GM12878 (cell line): ENCODE measurements at regions of chr14 and their contacts with region 1.

Region 1: DNA sequence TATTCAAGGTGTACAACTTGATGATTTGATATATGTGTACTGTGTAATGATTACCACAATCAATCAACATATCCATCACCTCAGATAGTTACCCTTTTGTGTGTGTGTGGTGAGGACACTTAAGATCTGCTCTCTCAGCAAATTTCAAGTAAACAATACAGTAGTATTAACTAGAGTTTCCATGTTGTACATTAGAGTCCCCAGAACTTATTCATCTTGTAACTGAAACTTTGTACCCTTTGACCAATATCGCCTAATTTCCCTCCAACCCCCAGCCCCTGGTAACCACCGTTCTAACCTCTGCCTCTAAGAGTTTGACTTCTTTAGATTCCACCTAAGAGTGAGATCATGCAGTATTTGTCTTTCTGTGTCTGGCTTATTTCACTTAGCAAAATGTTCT is 12.1 kb downstream of the ADCK1 start:
- DNase-seq: peak; percentile 20
- ATAC-seq: peak; percentile 87
- H3K4me3 ChIP-seq: no peak overlapping the region
- H3K27ac ChIP-seq: no peak overlapping the region
- H3K4me1 ChIP-seq: peaks cover 5% of the 10 kb centered on the region; the same call in 1 of the 2 replicates
- H3K27me3 ChIP-seq: no peaks in the 10 kb centered on the region
- CTCF ChIP-seq: no peak
- EP300 ChIP-seq: no peak
- POLR2A ChIP-seq: no peak
- RAD21 ChIP-seq: no peak

Region 2: DNA sequence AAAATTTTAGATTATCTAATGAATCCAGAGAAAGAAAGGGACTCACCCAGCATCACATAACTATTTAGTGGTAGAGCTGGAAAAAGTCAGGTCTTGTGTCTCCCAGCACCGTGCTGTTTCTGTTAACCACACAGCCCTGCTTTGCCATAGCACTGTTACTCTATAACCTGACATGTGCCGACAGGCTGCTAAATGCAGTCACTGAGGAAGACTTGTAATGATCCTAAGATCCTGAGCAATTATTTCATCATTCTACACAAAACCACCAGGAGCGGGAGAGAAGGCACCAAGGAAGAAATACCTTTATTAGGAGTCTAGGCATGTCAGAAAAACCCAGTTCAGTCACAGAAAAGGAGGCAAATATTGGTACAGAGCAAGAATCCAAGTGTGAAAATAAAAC is 385.6 kb before region 1 on chr14:
- CTCF ChIA-PET with region 1: no interaction called
- POLR2A ChIA-PET with region 1: interaction called, 11 read pairs
- RAD21 ChIA-PET with region 1: no interaction called
- SMC1A ChIA-PET with region 1: no interaction called
- in situ Hi-C with region 1: no loop called
- intact Hi-C with region 1: no loop called
- DNase-seq: no peak
- ATAC-seq: no peak
- H3K4me3 ChIP-seq: no peak overlapping the region
- H3K27ac ChIP-seq: no peak overlapping the region
- H3K4me1 ChIP-seq: no peaks in the 10 kb centered on the region
- H3K27me3 ChIP-seq: no peaks in the 10 kb centered on the region
- CTCF ChIP-seq: no peak
- EP300 ChIP-seq: no peak
- POLR2A ChIP-seq: no peak
- RAD21 ChIP-seq: no peak

Region 3: GRCh38 chr14:77654001-77654441 is 158.0 kb before region 1 on chr14:
- CTCF ChIA-PET with region 1: interaction called, 3 read pairs
- POLR2A ChIA-PET with region 1: no interaction called
- RAD21 ChIA-PET with region 1: no interaction called
- SMC1A ChIA-PET with region 1: no interaction called
- in situ Hi-C with region 1: no loop called
- intact Hi-C with region 1: loop called (anchors 2 kb)
- DNase-seq: no peak
- ATAC-seq: peak; percentile 18; the same call in 2 of the 3 replicates
- H3K4me3 ChIP-seq: no peak overlapping the region
- H3K27ac ChIP-seq: no peak overlapping the region
- H3K4me1 ChIP-seq: no peaks in the 10 kb centered on the region; the same call in 1 of the 2 replicates
- H3K27me3 ChIP-seq: no peaks in the 10 kb centered on the region
- CTCF ChIP-seq: no peak
- EP300 ChIP-seq: no peak
- POLR2A ChIP-seq: no peak
- RAD21 ChIP-seq: no peak

Region 4: GRCh38 chr14:77838831-77839511 is 26.9 kb after region 1 on chr14:
- CTCF ChIA-PET with region 1: no interaction called
- POLR2A ChIA-PET with region 1: no interaction called
- RAD21 ChIA-PET with region 1: no interaction called
- SMC1A ChIA-PET with region 1: no interaction called
- in situ Hi-C with region 1: no loop called
- intact Hi-C with region 1: no loop called
- DNase-seq: no peak
- ATAC-seq: no peak
- H3K4me3 ChIP-seq: no peak overlapping the region
- H3K27ac ChIP-seq: no peak overlapping the region
- H3K4me1 ChIP-seq: no peaks in the 10 kb centered on the region; the same call in 1 of the 2 replicates
- H3K27me3 ChIP-seq: no peaks in the 10 kb centered on the region
- CTCF ChIP-seq: no peak
- EP300 ChIP-seq: no peak
- POLR2A ChIP-seq: no peak
- RAD21 ChIP-seq: no peak

Region 5: DNA sequence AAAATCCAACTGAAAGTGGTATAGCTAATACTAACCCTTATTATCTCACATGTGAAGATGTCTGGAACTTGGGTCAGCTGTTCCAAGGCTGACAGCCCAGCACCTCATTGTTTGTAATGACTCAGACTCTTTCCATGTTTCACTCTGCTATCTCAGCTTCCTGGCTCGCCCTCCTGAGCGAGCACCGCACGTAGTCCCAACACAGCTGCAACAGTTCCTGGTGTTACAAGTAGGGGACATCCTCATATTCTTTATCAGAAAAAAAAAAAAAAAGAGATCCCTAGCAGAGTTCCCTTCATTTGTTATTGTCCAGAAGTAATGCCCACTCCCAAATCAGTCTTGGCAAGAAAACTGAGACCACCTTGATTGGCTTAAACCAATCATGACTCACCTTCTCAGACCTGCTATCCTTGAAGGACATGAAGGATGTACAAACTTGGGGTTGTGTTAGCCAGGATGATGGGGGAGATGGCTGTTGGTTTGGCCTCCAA is 80.4 kb after region 1 on chr14:
- CTCF ChIA-PET with region 1: no interaction called
- POLR2A ChIA-PET with region 1: no interaction called
- RAD21 ChIA-PET with region 1: no interaction called
- SMC1A ChIA-PET with region 1: no interaction called
- in situ Hi-C with region 1: no loop called
- intact Hi-C with region 1: no loop called
- DNase-seq: no peak
- ATAC-seq: no peak
- H3K4me3 ChIP-seq: no peak overlapping the region
- H3K27ac ChIP-seq: no peak overlapping the region
- H3K4me1 ChIP-seq: no peaks in the 10 kb centered on the region
- H3K27me3 ChIP-seq: no peaks in the 10 kb centered on the region
- CTCF ChIP-seq: no peak
- EP300 ChIP-seq: no peak
- POLR2A ChIP-seq: no peak
- RAD21 ChIP-seq: no peak